Cardiac septum (tissue), 1 donor: ENCODE measurements at regions of chr11 and their contacts with region 1.

Region 1: GRCh38 chr11:32792948-32793475 is 1.4 kb downstream of the CCDC73 start:
- DNase-seq: no peak

Region 2: GRCh38 chr11:32323814-32324130 is 469.2 kb before region 1 on chr11:
- intact Hi-C with region 1: loop called (anchors 5 kb)
- DNase-seq: no peak

Region 3: GRCh38 chr11:32385998-32386397 is 407.0 kb before region 1 on chr11:
- intact Hi-C with region 1: loop called (anchors 10 kb)
- DNase-seq: no peak

Region 4: DNA sequence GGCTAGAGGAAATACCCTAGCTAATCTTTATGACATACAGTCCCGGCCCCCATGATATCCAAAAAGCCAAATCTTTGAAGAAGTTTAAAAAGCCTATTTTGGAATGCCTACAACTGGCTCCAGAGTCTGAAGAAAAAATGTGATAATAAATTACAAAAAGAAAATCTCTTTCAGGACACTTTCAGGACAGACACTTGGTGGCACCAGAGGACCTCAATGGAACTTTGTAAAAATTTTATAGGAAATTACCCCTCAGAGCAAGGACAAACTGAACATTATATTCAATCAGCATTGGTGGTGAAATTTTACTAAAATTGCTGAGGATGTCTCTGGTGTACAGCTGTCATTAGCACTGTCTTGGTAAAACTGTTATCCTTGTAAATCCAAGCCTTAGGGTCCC is 79.5 kb before region 1 on chr11:
- intact Hi-C with region 1: loop called (anchors 5 kb)
- DNase-seq: no peak